ENCODE measurements at regions of chr14 and their contacts with region 1.

Region 1: GRCh38 chr14:74257078-74257989 is 18.1 kb downstream of the VSX2 start:
- DNase-seq: peak; percentile 89
- CTCF ChIP-seq: peak; percentile 91

Region 2: GRCh38 chr14:74109369-74109768 is 148.0 kb before region 1 on chr14:
- CTCF ChIA-PET with region 1: interaction called, 21 read pairs
- POLR2A ChIA-PET with region 1: no interaction called
- DNase-seq: no peak
- CTCF ChIP-seq: no peak

Region 3: GRCh38 chr14:74217672-74218448 is 39.5 kb before region 1 on chr14:
- CTCF ChIA-PET with region 1: interaction called, 15 read pairs
- POLR2A ChIA-PET with region 1: no interaction called
- DNase-seq: peak; percentile 90
- CTCF ChIP-seq: peak; percentile 94

Region 4: DNA sequence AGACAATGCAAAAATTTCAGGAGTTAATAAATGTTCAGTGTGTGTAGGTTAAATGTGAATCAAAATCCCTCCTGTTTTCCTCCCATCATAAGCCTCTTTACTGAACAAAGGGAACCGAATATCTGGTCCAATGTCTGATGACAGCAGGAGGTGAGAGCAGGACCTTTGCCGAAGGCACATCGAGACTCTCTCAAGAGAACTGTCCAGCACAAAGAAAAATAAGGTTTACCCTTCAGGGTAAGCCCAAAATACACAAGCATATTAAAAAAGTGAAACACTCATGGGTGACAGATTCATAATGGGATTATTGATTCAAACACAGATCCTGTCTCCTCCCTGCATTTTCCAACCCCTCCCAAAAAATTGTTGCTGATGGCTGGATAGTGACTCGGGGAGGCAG is 22.3 kb before region 1 on chr14:
- CTCF ChIA-PET with region 1: interaction called, 13 read pairs
- POLR2A ChIA-PET with region 1: no interaction called
- DNase-seq: no peak
- CTCF ChIP-seq: no peak

Region 5: GRCh38 chr14:74244115-74244514 is 13.2 kb before region 1 on chr14:
- CTCF ChIA-PET with region 1: interaction called, 10 read pairs
- POLR2A ChIA-PET with region 1: no interaction called
- DNase-seq: no peak
- CTCF ChIP-seq: peak; percentile 1

Region 6: GRCh38 chr14:74267588-74267987 is 10.3 kb after region 1 on chr14:
- CTCF ChIA-PET with region 1: interaction called, 38 read pairs
- POLR2A ChIA-PET with region 1: no interaction called
- DNase-seq: no peak
- CTCF ChIP-seq: no peak

Region 7: GRCh38 chr14:75141967-75142366 is 884.6 kb after region 1 on chr14:
- CTCF ChIA-PET with region 1: no interaction called
- POLR2A ChIA-PET with region 1: no interaction called
- DNase-seq: no peak
- CTCF ChIP-seq: peak; percentile 36